HEK293T (cell line): ENCODE measurements at regions of chr2 and their contacts with region 1.

Region 1: GRCh38 chr2:108927936-108928659 is 60.9 kb downstream of the EDAR start:
- DNase-seq: peak; percentile 69

Region 2: GRCh38 chr2:108855194-108855593 is 72.9 kb before region 1 on chr2:
- CTCF ChIA-PET with region 1: interaction called, 10 read pairs
- POLR2A ChIA-PET with region 1: no interaction called
- DNase-seq: no peak

Region 3: DNA sequence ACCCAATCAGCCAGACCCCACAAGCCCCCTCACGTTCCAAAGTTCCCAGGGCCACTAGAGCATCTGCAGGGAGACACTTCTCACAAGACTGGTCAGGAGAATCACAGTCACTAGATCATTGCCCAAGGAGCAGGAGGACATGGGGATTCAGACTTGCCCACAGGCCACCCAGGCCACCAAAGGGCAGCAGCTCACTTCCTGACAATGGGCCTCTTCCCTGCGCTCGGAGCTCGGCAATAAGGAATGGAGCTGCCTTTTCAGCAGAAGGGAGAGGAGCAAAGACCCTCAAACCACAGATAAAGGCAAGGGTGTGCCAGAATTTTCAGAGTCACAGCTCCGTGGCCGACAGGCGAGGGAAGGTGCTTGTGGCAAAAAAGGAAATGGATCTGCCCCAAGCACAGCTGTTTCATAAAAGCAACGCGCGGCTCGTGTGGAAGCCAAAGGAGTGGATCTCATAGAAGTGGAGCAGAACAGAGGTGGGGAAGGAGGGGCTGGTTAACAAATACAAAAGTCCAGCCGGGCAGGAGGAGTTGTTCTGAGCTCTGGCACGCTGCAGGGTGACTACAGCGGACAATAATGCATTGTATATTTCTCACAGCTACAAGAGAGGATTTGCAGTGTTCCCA is 11.2 kb before region 1 on chr2:
- CTCF ChIA-PET with region 1: interaction called, 11 read pairs
- POLR2A ChIA-PET with region 1: no interaction called
- DNase-seq: no peak